Mucosa of descending colon (tissue), 3 donors: ENCODE measurements at regions of chr21 and their contacts with region 1.

Region 1: DNA sequence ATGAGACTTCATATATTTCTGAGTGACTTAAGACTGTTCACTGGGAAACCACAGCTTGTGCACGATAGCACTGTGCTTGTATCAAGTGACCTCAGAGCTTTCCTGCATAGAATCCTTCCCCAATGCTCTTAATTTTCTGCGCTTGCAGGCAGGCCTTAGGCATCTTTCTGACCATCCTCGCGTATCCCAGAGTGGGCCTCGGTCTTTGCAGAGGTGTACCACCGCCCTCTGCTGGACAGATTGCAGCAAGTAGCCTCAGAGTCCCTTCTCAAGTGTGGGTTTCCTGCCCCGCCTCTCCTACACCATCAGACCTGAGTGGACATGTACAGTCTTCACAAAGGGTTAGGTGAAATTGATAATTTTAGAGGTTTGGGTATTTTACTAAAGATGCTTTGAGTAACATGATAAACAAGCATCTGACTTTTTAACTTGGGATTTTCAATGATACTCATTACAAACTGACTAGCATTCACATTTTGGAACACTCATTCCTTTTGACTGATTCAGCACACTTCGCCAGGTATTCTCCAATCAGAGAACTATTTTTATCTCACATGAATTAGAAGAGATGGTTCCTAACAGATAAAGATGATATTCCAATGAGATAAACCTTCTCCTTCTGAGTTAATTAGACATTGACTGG is 246.5 kb upstream of the USP25 start:
- DNase-seq: peak; percentile 75 to 94 (median 87)
- ATAC-seq: peak; percentile 100
- H3K4me3 ChIP-seq: no peak overlapping the region
- H3K4me1 ChIP-seq: no peaks in the 10 kb centered on the region
- CTCF ChIP-seq: peak; percentile 89

Region 2: GRCh38 chr21:14864211-14865021 is 618.8 kb before region 1 on chr21:
- intact Hi-C with region 1: loop called in 1 of 2 experiments (anchors 10 kb)
- DNase-seq: peak; percentile 71 to 84 (median 81)
- ATAC-seq: peak; percentile 95
- H3K4me3 ChIP-seq: no peak overlapping the region
- H3K4me1 ChIP-seq: peaks cover 4% of the 10 kb centered on the region
- CTCF ChIP-seq: peak; percentile 63

Region 3: GRCh38 chr21:15826147-15826780 is 343.0 kb after region 1 on chr21:
- intact Hi-C with region 1: loop called in 1 of 2 experiments (anchors 10 kb)
- DNase-seq: peak in 1 of 3 donors; percentile 71
- ATAC-seq: peak; percentile 92
- H3K4me3 ChIP-seq: no peak overlapping the region
- H3K4me1 ChIP-seq: no peaks in the 10 kb centered on the region
- CTCF ChIP-seq: peak; percentile 23